ENCODE measurements at regions of chr9 and their contacts with region 1.

Region 1: GRCh38 chr9:34376596-34377403 is at the start of gene MYORG:
- DNase-seq: peak; percentile 97
- ATAC-seq: peak; percentile 85
- H3K4me3 ChIP-seq: peak within 1 kb of the TSS; percentile 69 to 85 (median 80)
- H3K4me3 Mint-ChIP-seq: peak within 1 kb of the TSS; percentile 98
- H3K27ac ChIP-seq: no peak within 1 kb of the TSS
- H3K27ac Mint-ChIP-seq: peak within 1 kb of the TSS; percentile 91
- H3K4me1 ChIP-seq: peaks cover 29 to 43% of the 10 kb centered on the region in 2 donors
- H3K4me1 Mint-ChIP-seq: peaks cover 39% of the 10 kb centered on the region
- H3K27me3 ChIP-seq: peaks cover 0 to 15% (median 4%) of the 10 kb centered on the region in 4 experiments
- H3K27me3 Mint-ChIP-seq: no peaks in the 10 kb centered on the region
- CTCF ChIP-seq: peak; percentile 29
- total RNA-seq, gene MYORG: 0.37 and 0.49 TPM in 2 replicates

Region 2: DNA sequence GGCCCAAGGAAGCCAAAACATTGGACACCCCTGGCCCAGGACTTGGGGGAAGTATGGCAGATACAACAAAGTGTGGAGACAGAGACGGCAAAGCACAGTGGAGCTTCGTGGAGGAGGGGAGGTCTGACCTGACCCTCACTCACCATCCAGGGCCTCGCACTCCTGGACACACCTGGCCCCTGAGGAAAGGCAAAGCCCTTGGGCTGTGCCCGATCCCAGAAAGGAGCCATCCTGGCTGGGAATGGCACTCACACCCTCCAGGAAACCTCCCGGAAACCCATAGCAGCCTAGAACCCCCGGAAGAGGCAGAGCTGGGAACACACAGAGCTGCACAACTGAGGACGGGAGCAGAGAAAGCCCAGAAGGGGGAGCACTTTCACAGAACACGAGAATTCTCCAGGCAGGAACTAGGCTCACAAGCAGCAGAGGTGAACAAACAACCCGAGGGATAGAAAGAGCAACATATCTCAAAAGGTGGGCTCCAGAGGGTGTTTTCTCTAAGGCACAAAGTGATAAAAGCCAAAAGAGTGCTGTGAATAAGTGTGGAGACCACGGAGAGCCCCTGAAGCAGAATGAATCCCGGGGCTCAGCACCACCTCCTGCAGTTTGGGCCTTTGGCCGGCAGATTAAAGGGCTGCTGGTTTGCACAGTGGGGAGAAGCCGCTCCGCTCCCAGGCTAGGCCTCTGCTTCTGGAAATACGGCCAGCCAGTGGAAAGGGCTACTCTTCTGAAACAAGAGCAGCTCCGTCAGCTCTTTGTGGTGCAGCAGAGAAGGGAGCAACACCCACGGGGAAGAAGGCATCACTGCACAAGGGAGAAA is 451.6 kb before region 1 on chr9:
- CTCF ChIA-PET with region 1: interaction called, 4 read pairs
- POLR2A ChIA-PET with region 1: no interaction called
- intact Hi-C with region 1: loop called (anchors 10 kb)
- DNase-seq: peak; percentile 35
- ATAC-seq: no peak
- H3K4me3 ChIP-seq: no peak overlapping the region
- H3K4me3 Mint-ChIP-seq: no peak overlapping the region
- H3K27ac ChIP-seq: no peak overlapping the region
- H3K27ac Mint-ChIP-seq: no peak overlapping the region
- H3K4me1 ChIP-seq: no peaks in the 10 kb centered on the region
- H3K4me1 Mint-ChIP-seq: no peaks in the 10 kb centered on the region
- H3K27me3 ChIP-seq: no peaks in the 10 kb centered on the region
- H3K27me3 Mint-ChIP-seq: no peaks in the 10 kb centered on the region
- CTCF ChIP-seq: peak; percentile 18

Region 3: GRCh38 chr9:34178520-34179212 is 198.1 kb before region 1 on chr9 and contains the start of gene UBAP1:
- CTCF ChIA-PET with region 1: interaction called, 3 read pairs
- POLR2A ChIA-PET with region 1: interaction called, 5 read pairs
- intact Hi-C with region 1: loop called (anchors 2 kb)
- DNase-seq: peak; percentile 95
- ATAC-seq: peak; percentile 99
- H3K4me3 ChIP-seq: peak within 1 kb of the TSS; percentile 68 to 94 (median 75)
- H3K4me3 Mint-ChIP-seq: peak within 1 kb of the TSS; percentile 92
- H3K27ac ChIP-seq: peak within 1 kb of the TSS; percentile 84 to 88
- H3K27ac Mint-ChIP-seq: peak within 1 kb of the TSS; percentile 93
- H3K4me1 ChIP-seq: peaks cover 8 to 21% of the 10 kb centered on the region in 2 donors
- H3K4me1 Mint-ChIP-seq: peaks cover 18% of the 10 kb centered on the region
- H3K27me3 ChIP-seq: peaks cover 0 to 17% (median 2%) of the 10 kb centered on the region in 4 experiments
- H3K27me3 Mint-ChIP-seq: no peaks in the 10 kb centered on the region
- CTCF ChIP-seq: no peak
- total RNA-seq, gene UBAP1: 27.0 and 29.3 TPM in 2 replicates

Region 4: GRCh38 chr9:34413231-34413852 is 36.5 kb after region 1 on chr9:
- CTCF ChIA-PET with region 1: no interaction called
- POLR2A ChIA-PET with region 1: no interaction called
- intact Hi-C with region 1: no loop called
- DNase-seq: no peak
- ATAC-seq: no peak
- H3K4me3 ChIP-seq: no peak overlapping the region
- H3K4me3 Mint-ChIP-seq: no peak overlapping the region
- H3K27ac ChIP-seq: no peak overlapping the region
- H3K27ac Mint-ChIP-seq: no peak overlapping the region
- H3K4me1 ChIP-seq: no peaks in the 10 kb centered on the region
- H3K4me1 Mint-ChIP-seq: no peaks in the 10 kb centered on the region
- H3K27me3 ChIP-seq: no peaks in the 10 kb centered on the region
- H3K27me3 Mint-ChIP-seq: no peaks in the 10 kb centered on the region
- CTCF ChIP-seq: no peak

Region 5: GRCh38 chr9:34458013-34458958 is 81.5 kb after region 1 on chr9 and contains the starts of genes DNAI1 and FAM219A:
- CTCF ChIA-PET with region 1: no interaction called
- POLR2A ChIA-PET with region 1: interaction called, 6 read pairs
- intact Hi-C with region 1: loop called (anchors 1 kb)
- DNase-seq: peak; percentile 99
- ATAC-seq: peak; percentile 96
- H3K4me3 ChIP-seq: peak within 1 kb of the TSS; percentile 32 to 76 (median 58)
- H3K4me3 Mint-ChIP-seq: peak within 1 kb of the TSS; percentile 96
- H3K27ac ChIP-seq: no peak within 1 kb of the TSS
- H3K27ac Mint-ChIP-seq: peak within 1 kb of the TSS; percentile 86
- H3K4me1 ChIP-seq: peaks cover 14 to 24% of the 10 kb centered on the region in 2 donors
- H3K4me1 Mint-ChIP-seq: peaks cover 35% of the 10 kb centered on the region
- H3K27me3 ChIP-seq: peaks cover 0 to 9% (median 4%) of the 10 kb centered on the region in 4 experiments
- H3K27me3 Mint-ChIP-seq: peaks cover 14% of the 10 kb centered on the region
- CTCF ChIP-seq: no peak
- total RNA-seq, gene DNAI1: not detected in 2 replicates
- total RNA-seq, gene FAM219A: 16.0 and 17.3 TPM in 2 replicates

Region 6: GRCh38 chr9:34637356-34638137 is 260.7 kb after region 1 on chr9 and contains the start of gene SIGMAR1:
- CTCF ChIA-PET with region 1: interaction called, 4 read pairs
- POLR2A ChIA-PET with region 1: interaction called, 4 read pairs
- intact Hi-C with region 1: loop called (anchors 2 kb)
- DNase-seq: peak; percentile 96
- ATAC-seq: peak; percentile 96
- H3K4me3 ChIP-seq: peak within 1 kb of the TSS; percentile 49 to 80 (median 63)
- H3K4me3 Mint-ChIP-seq: peak within 1 kb of the TSS; percentile 92
- H3K27ac ChIP-seq: peak within 1 kb of the TSS; percentile 56 to 69
- H3K27ac Mint-ChIP-seq: peak within 1 kb of the TSS; percentile 86
- H3K4me1 ChIP-seq: peaks cover 16 to 32% of the 10 kb centered on the region in 2 donors
- H3K4me1 Mint-ChIP-seq: peaks cover 30% of the 10 kb centered on the region
- H3K27me3 ChIP-seq: no peaks in the 10 kb centered on the region
- H3K27me3 Mint-ChIP-seq: no peaks in the 10 kb centered on the region
- CTCF ChIP-seq: no peak
- total RNA-seq, gene SIGMAR1: 21.4 and 23.0 TPM in 2 replicates